ENCODE measurements at regions of chr2 and their contacts with region 1.

Region 1: DNA sequence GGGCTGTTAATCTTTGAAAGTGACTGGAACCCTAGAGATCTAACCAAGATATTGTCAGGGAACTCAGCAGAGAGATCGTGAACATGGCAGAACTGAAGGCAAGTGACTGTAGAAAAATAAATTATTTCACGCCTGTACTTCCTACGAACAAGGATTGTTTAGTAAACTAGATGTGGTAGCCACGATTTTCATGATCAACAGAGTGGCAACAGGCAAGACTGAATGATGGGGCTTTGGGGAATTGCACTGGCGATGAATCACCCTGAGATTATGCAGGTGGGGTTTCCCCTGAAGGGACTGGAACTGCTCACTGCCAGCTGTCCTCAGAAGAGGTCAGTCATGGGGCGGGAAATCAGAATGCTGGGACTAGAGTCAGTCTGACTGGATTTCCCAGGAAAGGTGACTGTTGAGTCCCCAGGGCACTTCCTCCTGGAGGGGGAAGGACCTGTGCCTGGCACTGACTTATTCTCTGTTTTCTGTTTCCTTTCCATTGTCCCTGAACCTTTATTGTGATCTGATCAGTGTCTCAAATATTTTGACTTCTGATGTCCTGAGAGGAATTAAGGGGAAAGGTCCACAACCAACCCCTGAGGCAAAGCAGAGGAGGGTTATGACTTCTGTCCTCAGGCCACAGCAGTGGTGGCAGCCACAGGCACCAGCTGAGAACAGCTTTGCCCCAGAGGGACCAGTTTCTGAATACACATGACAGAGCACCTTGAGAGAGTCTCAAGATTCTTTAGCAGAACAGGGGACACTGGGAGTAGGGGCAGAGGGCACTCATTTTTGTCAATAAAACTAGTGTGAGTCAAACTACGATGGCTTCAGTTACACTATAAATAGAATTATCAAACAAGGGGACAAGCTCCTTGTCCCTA is 70.0 kb downstream of the NAB1 start:
- DNase-seq: no peak
- H3K4me3 Mint-ChIP-seq: peak overlapping the region; percentile 28
- H3K27ac Mint-ChIP-seq: peak overlapping the region; percentile 92
- H3K4me1 Mint-ChIP-seq: peaks cover 75% of the 10 kb centered on the region
- H3K27me3 Mint-ChIP-seq: no peaks in the 10 kb centered on the region

Region 2: GRCh38 chr2:190534310-190535120 is 184.4 kb before region 1 on chr2 and contains the start of gene NEMP2:
- intact Hi-C with region 1: loop called (anchors 2 kb)
- DNase-seq: peak; percentile 84
- H3K4me3 Mint-ChIP-seq: peak within 1 kb of the TSS; percentile 95
- H3K27ac Mint-ChIP-seq: peak within 1 kb of the TSS; percentile 98
- H3K4me1 Mint-ChIP-seq: peaks cover 48% of the 10 kb centered on the region
- H3K27me3 Mint-ChIP-seq: no peaks in the 10 kb centered on the region
- total RNA-seq, gene NEMP2: 15.2 and 15.5 TPM in 2 replicates

Region 3: DNA sequence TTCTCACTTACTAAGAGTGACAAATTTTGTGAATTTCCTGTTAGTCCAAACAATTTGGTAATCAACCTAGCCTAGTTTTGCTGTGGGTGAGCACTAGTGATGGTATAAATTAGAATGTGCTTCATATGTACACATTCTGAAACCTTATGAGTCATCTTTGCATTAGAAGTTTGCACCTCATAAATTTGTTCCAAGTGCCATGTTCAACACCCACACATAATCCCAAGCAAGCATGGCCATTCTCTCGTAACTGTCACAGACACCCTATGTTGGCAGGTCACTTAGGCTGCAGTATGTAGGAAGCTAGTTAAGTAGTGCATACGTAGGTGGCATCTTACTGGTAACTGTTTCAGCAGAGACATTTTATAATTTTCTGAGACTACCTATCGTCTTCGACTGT is 23.1 kb before region 1 on chr2:
- intact Hi-C with region 1: loop called (anchors 1 kb)
- DNase-seq: no peak
- H3K4me3 Mint-ChIP-seq: no peak overlapping the region
- H3K27ac Mint-ChIP-seq: peak overlapping the region; percentile 18
- H3K4me1 Mint-ChIP-seq: peaks cover 24% of the 10 kb centered on the region
- H3K27me3 Mint-ChIP-seq: no peaks in the 10 kb centered on the region

Region 4: GRCh38 chr2:190791347-190791975 is 72.6 kb after region 1 on chr2:
- intact Hi-C with region 1: loop called (anchors 1 kb)
- DNase-seq: no peak
- H3K4me3 Mint-ChIP-seq: peak overlapping the region; percentile 15
- H3K27ac Mint-ChIP-seq: peak overlapping the region; percentile 75
- H3K4me1 Mint-ChIP-seq: peaks cover 65% of the 10 kb centered on the region
- H3K27me3 Mint-ChIP-seq: no peaks in the 10 kb centered on the region

Region 5: DNA sequence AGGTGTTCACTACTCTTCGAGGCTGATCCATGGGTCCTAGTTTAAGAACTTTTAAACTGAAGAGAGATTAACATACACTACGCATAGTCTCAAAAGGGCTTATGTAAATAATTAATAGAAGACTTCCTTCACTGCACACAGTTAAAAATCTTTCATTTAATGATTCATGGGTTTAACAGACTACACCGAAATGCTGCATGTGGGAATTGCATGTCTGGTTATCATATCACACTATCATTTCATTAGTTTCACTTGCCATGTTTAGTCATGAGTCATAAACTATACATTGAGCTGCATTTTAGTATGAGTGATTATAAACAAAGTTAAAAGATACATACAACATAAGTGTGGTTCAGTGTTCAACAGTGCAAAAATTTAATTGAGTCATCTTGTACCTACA is 192.9 kb after region 1 on chr2:
- intact Hi-C with region 1: loop called (anchors 1 kb)
- DNase-seq: no peak
- H3K4me3 Mint-ChIP-seq: no peak overlapping the region
- H3K27ac Mint-ChIP-seq: peak overlapping the region; percentile 53
- H3K4me1 Mint-ChIP-seq: peaks cover 42% of the 10 kb centered on the region
- H3K27me3 Mint-ChIP-seq: no peaks in the 10 kb centered on the region

Region 6: DNA sequence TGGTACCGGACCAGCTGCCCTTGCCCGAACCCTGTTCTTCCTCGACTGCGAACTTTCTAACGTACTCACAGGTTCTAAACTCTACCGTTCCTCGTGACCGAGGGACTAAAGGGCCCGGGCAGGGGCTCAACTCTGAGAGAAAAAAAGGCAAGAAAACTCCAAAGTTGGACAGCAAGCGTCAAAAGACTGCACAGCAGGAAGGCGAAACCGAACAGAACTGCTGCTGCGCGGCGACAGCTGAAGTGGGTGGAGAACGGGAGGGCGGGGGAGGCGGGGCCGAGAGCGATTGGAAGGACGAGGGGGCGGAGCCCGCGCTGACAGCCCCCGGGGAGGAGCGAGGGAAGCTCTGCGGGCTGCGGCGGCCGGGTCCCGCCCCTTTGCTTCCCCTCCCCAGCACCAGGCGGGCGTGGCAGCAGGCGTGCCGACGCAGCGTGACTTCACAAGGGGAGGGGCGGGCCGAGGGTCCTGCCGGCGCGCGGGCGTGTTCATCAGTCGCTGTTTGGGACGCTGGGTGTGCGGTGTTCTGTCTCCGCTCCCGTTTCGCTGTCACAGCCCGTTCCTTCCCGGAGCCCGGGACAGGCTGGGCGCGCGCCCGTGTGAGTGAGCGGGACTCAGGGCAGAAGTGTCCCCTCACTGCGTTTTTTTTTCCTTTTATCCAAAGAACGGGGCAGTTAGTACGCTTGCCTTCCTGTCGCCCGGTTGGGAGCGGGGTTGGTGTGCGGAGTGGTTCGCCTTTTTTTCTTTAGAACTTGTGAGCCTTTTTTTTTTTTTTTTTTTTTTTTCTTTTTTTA is 959.0 kb after region 1 on chr2 and contains the start of gene NABP1:
- intact Hi-C with region 1: loop called (anchors 2 kb)
- DNase-seq: peak; percentile 97
- H3K4me3 Mint-ChIP-seq: peak within 1 kb of the TSS; percentile 84
- H3K27ac Mint-ChIP-seq: peak within 1 kb of the TSS; percentile 99
- H3K4me1 Mint-ChIP-seq: peaks cover 51% of the 10 kb centered on the region
- H3K27me3 Mint-ChIP-seq: no peaks in the 10 kb centered on the region
- total RNA-seq, gene NABP1: 39.9 and 40.0 TPM in 2 replicates

Measured in activated T-helper 2 cell treated with anti-CD3 and anti-CD28 coated beads, Interferon-gamma antibody, Interleukin-2, Interleukin-4, amounts not matched to agents 10 μg/mL and 5 μg/mL and 100 μg/mL, durations not matched to agents 14 hours and 24 hours and 36 hours (primary cell).